CD4-positive, alpha-beta memory T cell (primary cell): ENCODE measurements at regions of chr15 and their contacts with region 1.

Region 1: GRCh38 chr15:55318588-55319494 is at the starts of genes PIGB and PIGBOS1:
- DNase-seq: peak; percentile 83 to 88 (median 87)
- H3K4me3 ChIP-seq: peak within 1 kb of the TSS; percentile 98 to 100
- H3K4me3 Mint-ChIP-seq: peak within 1 kb of the TSS; percentile 96 to 100 (median 98)
- H3K27ac ChIP-seq: peak within 1 kb of the TSS; percentile 93
- H3K27ac Mint-ChIP-seq: peak within 1 kb of the TSS; percentile 99 to 100 (median 100)
- H3K4me1 ChIP-seq: peaks cover 61% of the 10 kb centered on the region
- H3K4me1 Mint-ChIP-seq: peaks cover 44 to 82% (median 64%) of the 10 kb centered on the region in 4 donors
- H3K27me3 ChIP-seq: no peaks in the 10 kb centered on the region
- H3K27me3 Mint-ChIP-seq: no peaks in the 10 kb centered on the region
- total RNA-seq, gene PIGB: 26.4 to 28.6 TPM
- total RNA-seq, gene PIGBOS1: 14.1 to 20.3 TPM

Region 2: GRCh38 chr15:54424171-54424570 is 894.7 kb before region 1 on chr15:
- CTCF ChIA-PET with region 1: no interaction called
- POLR2A ChIA-PET with region 1: no interaction called
- intact Hi-C with region 1: no loop called
- DNase-seq: no peak
- H3K4me3 ChIP-seq: no peak overlapping the region
- H3K4me3 Mint-ChIP-seq: no peak overlapping the region
- H3K27ac ChIP-seq: no peak overlapping the region
- H3K27ac Mint-ChIP-seq: no peak overlapping the region
- H3K4me1 ChIP-seq: no peaks in the 10 kb centered on the region
- H3K4me1 Mint-ChIP-seq: no peaks in the 10 kb centered on the region
- H3K27me3 ChIP-seq: no peaks in the 10 kb centered on the region
- H3K27me3 Mint-ChIP-seq: peaks cover 0 to 1% of the 10 kb centered on the region in 2 donors

Region 3: GRCh38 chr15:55196458-55197361 is 122.1 kb before region 1 on chr15 and contains the start of gene RSL24D1:
- CTCF ChIA-PET with region 1: interaction called, 14 read pairs
- POLR2A ChIA-PET with region 1: interaction called, 48 read pairs
- intact Hi-C with region 1: loop called (anchors 1 kb)
- DNase-seq: peak; percentile 94 to 98 (median 97)
- H3K4me3 ChIP-seq: peak within 1 kb of the TSS; percentile 90 to 97
- H3K4me3 Mint-ChIP-seq: no peak within 1 kb of the TSS
- H3K27ac ChIP-seq: peak within 1 kb of the TSS; percentile 87
- H3K27ac Mint-ChIP-seq: no peak within 1 kb of the TSS
- H3K4me1 ChIP-seq: peaks cover 40% of the 10 kb centered on the region
- H3K4me1 Mint-ChIP-seq: peaks cover 10 to 17% (median 13%) of the 10 kb centered on the region in 4 donors
- H3K27me3 ChIP-seq: no peaks in the 10 kb centered on the region
- H3K27me3 Mint-ChIP-seq: no peaks in the 10 kb centered on the region
- total RNA-seq, gene RSL24D1: 103 to 107 TPM